ENCODE measurements at regions of chr1 and their contacts with region 1.

Region 1: GRCh38 chr1:53172426-53173128 is 24.0 kb upstream of the CPT2 start:
- DNase-seq: no peak
- H3K4me3 ChIP-seq: no peak overlapping the region
- H3K27ac ChIP-seq: no peak overlapping the region
- H3K4me1 ChIP-seq: no peaks in the 10 kb centered on the region
- H3K27me3 ChIP-seq: no peaks in the 10 kb centered on the region
- CTCF ChIP-seq: no peak
- POLR2A ChIP-seq: no peak

Region 2: GRCh38 chr1:52520148-52520547 is 652.4 kb before region 1 on chr1:
- intact Hi-C with region 1: no loop called
- DNase-seq: no peak
- H3K4me3 ChIP-seq: no peak overlapping the region
- H3K27ac ChIP-seq: no peak overlapping the region
- H3K4me1 ChIP-seq: no peaks in the 10 kb centered on the region
- H3K27me3 ChIP-seq: no peaks in the 10 kb centered on the region
- CTCF ChIP-seq: no peak
- POLR2A ChIP-seq: no peak

Region 3: GRCh38 chr1:52927212-52928014 is 245.2 kb before region 1 on chr1 and contains the start of gene SCP2:
- intact Hi-C with region 1: loop called in 1 of 2 experiments (anchors 10 kb)
- DNase-seq: peak; percentile 81 to 88 (median 87)
- H3K4me3 ChIP-seq: peak within 1 kb of the TSS; percentile 41 to 75 (median 72)
- H3K27ac ChIP-seq: peak within 1 kb of the TSS in 4 of 5 donors; percentile 62 to 87 (median 82)
- H3K4me1 ChIP-seq: peaks cover 0 to 16% of the 10 kb centered on the region in 2 donors
- H3K27me3 ChIP-seq: no peaks in the 10 kb centered on the region
- CTCF ChIP-seq: no peak
- POLR2A ChIP-seq: peak; percentile 76 to 88
- total RNA-seq, gene SCP2: 114 to 170 (median 139) TPM